Activated naive CD4-positive, alpha-beta T cell treated with anti-CD3 and anti-CD28 coated beads for 36 hours (primary cell): ENCODE measurements at regions of chr9 and their contacts with region 1.

Region 1: GRCh38 chr9:5909976-5910375 is 19.3 kb downstream of the MLANA start:
- DNase-seq: no peak
- H3K4me3 Mint-ChIP-seq: peak overlapping the region; percentile 32
- H3K27ac Mint-ChIP-seq: peak overlapping the region; percentile 89
- H3K4me1 Mint-ChIP-seq: peaks cover 29% of the 10 kb centered on the region
- H3K27me3 Mint-ChIP-seq: no peaks in the 10 kb centered on the region

Region 2: DNA sequence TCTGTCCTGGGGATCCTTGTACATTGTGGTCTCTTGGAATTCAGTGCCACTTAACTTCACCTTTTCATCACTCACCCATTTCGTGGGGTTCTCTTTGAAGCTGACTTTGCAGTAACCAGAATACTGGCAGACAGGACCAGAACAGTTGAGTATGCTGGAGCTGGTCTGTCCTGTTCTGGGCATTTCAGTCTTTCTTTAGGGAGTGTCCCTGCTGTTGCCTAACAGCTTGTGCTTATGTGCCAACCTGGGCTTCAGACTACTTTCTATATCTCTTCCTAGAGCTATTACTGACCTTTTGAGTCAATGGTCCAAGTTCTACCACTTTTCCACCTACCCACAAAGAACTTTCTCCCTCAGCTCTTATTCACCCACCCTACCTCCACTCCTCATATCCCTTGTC is 714.5 kb before region 1 on chr9:
- CTCF ChIA-PET with region 1: no interaction called
- intact Hi-C with region 1: no loop called
- DNase-seq: no peak
- H3K4me3 Mint-ChIP-seq: no peak overlapping the region
- H3K27ac Mint-ChIP-seq: no peak overlapping the region
- H3K4me1 Mint-ChIP-seq: no peaks in the 10 kb centered on the region
- H3K27me3 Mint-ChIP-seq: no peaks in the 10 kb centered on the region

Region 3: DNA sequence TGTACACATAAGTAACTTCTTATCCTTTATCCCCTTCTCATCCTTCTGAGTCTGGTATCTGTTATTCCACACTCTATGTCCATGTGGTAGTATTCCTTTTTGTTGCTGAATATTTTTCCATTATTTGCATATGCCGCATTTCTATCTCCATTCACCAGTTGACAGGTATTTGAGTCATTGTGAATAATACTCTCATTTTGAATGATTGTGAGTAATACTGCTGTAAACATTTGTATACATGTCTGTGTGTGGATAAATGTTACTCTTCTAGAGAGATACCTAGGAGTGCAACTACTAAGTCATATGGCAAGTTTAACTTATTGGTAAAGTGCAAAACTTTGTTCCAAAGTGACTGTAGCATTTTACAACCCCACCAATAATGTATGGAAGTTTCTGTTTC is 265.5 kb before region 1 on chr9:
- CTCF ChIA-PET with region 1: no interaction called
- intact Hi-C with region 1: loop called (anchors 1 kb)
- DNase-seq: no peak
- H3K4me3 Mint-ChIP-seq: no peak overlapping the region
- H3K27ac Mint-ChIP-seq: no peak overlapping the region
- H3K4me1 Mint-ChIP-seq: peaks cover 43% of the 10 kb centered on the region
- H3K27me3 Mint-ChIP-seq: no peaks in the 10 kb centered on the region

Region 4: DNA sequence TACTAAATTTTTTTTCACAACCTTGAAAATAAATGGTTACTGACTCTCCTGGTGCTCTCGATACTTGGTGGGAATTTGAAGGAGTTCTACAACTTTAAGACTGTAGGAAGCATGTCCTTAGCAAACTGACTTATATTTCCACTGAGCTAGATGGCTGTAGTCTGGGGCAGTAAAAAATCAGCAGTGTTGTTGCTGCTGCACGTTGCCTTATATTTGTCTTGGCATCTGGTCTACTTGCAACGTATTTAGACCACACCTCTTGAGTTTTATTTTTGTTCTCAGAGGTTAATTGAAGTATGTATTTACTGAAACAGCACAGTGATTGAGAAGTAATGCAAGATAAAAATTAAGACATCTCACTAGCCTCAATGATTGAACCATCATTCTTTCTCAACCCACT is 153.3 kb before region 1 on chr9:
- CTCF ChIA-PET with region 1: no interaction called
- intact Hi-C with region 1: no loop called
- DNase-seq: no peak
- H3K4me3 Mint-ChIP-seq: no peak overlapping the region
- H3K27ac Mint-ChIP-seq: no peak overlapping the region
- H3K4me1 Mint-ChIP-seq: peaks cover 26% of the 10 kb centered on the region
- H3K27me3 Mint-ChIP-seq: no peaks in the 10 kb centered on the region

Region 5: DNA sequence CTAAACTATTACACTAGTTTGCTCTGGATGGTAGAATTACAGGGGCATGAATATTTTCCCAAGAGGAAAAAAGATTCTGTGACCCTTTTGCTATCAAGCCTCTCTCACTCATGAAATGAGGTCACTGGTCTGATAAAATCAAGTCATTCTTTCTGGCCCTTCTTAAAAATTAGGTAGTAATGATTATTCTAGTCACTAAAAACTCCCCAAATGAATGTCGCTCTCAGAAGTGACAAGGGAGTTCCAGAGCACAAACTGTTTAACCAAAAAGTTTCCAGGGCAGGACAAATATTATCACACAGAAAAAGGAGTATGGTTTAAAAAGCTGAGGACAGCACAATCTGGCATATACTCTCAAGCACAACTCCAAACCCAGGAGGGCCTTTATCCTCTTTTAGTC is 89.6 kb before region 1 on chr9:
- CTCF ChIA-PET with region 1: no interaction called
- intact Hi-C with region 1: no loop called
- DNase-seq: no peak
- H3K4me3 Mint-ChIP-seq: no peak overlapping the region
- H3K27ac Mint-ChIP-seq: no peak overlapping the region
- H3K4me1 Mint-ChIP-seq: peaks cover 5% of the 10 kb centered on the region
- H3K27me3 Mint-ChIP-seq: no peaks in the 10 kb centered on the region

Region 6: DNA sequence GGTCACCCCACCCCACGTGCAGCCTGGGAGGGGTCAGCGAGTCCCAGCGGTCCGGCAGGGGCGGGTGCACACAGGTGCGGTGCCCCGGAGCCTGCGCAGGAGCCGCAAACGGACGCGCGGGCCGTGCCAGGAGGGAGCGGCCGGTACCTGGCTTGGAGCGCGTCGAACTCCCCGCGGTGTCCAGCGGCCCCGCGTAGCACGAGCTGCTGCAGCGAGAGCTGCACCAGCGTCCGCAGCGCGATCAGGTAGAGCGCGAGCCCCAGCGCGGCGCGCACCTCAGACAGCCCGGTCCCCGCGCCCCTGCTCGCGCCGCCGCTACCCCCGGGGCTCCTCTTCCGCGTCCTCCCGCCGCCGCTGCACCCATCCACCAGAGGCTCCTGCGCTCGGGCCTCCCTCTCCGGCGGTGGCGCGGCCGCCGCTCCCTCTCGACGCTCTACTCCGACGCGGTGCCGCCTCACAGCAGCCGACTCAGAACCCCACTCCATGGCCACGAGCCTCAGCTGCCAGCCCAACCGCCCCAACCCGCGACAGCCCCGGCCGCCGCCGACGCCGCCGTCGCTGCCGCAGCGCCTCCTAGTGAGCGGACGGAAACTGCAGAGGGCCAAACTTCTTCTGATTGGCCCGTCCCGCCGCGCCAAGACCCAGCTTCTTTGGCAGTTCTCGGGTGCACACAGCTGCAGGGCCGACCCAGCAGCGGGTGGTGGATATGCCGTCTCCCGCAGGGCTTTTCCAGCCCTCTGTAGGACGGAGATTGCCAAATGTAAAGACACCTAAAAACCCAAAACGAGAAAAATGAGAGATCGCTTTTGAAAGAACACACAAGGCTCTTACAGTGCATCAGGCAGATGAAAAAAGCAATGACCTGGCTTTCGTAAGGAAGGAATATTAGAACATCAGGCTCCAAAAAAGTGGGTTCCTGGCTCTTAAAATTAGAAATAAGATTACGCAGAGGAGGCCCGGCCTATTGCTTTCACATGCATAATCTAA is 77.1 kb before region 1 on chr9 and contains the start of gene ERMP1:
- CTCF ChIA-PET with region 1: no interaction called
- intact Hi-C with region 1: loop called (anchors 1 kb)
- DNase-seq: peak; percentile 93
- H3K4me3 Mint-ChIP-seq: peak within 1 kb of the TSS; percentile 93
- H3K27ac Mint-ChIP-seq: peak within 1 kb of the TSS; percentile 89
- H3K4me1 Mint-ChIP-seq: peaks cover 43% of the 10 kb centered on the region
- H3K27me3 Mint-ChIP-seq: no peaks in the 10 kb centered on the region
- total RNA-seq, gene ERMP1: 23.5 to 27.1 TPM

Region 7: DNA sequence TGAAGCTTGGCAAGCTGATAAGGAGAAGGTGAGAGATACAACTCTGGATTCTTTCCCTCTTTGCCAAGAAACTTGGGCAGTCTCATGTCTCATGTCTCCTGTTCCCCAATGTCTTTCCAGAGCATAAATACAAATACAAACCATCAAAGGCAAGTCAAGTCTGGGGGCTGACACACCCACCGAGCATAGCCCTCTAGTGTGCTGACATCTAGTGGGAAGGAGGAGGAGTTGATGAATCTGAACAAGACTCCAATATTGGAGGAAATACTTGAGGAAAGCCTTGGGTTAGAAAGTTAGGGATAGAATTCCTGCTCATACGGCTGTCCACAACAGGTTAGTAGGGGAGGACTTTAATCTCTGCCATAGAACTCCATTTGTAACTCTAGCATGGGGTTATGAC is 10.7 kb before region 1 on chr9:
- CTCF ChIA-PET with region 1: interaction called, 5 read pairs
- intact Hi-C with region 1: loop called (anchors 1 kb)
- DNase-seq: no peak
- H3K4me3 Mint-ChIP-seq: no peak overlapping the region
- H3K27ac Mint-ChIP-seq: peak overlapping the region; percentile 59
- H3K4me1 Mint-ChIP-seq: peaks cover 37% of the 10 kb centered on the region
- H3K27me3 Mint-ChIP-seq: no peaks in the 10 kb centered on the region

Region 8: DNA sequence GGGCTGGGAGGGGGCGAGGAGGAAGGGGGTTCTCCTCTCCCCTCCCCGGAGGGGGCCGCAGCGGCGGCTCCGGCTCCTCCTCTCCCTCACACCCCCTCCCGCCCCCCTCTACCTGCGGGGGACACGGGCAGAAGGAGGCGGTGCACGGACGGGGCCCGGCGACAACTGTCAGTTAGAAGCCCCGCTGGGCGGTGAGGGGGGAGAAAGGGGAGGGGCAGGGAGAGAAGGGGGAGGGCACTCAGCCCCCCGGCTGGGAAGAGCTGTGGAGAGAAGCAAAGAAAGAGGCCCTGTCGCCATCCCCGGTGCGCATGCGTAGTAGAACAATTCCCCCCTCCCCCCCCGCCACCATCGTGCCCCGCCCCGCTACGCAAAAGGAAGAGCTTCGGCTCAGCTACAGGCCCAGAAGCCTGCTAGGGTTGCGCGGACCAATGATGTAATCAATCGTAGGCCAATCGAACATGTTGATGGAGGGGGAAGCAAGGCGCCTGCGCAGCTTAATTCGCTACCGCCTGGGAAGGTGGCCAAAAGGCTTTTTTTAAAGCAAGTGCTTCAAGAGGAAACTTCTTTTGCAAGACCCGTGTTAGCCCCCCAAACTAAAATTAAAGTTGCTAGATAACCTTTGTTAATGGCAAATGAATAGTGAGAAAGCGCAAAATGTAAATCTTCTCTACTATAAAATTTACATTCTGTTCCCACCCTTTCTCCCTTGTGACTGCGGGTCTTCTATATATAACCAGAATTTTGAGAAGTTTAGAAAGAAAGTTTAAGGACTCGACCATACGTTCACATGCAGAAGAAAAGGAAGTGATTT is 98.4 kb after region 1 on chr9:
- CTCF ChIA-PET with region 1: no interaction called
- intact Hi-C with region 1: loop called (anchors 1 kb)
- DNase-seq: peak; percentile 98
- H3K4me3 Mint-ChIP-seq: peak overlapping the region; percentile 76
- H3K27ac Mint-ChIP-seq: peak overlapping the region; percentile 82
- H3K4me1 Mint-ChIP-seq: peaks cover 61% of the 10 kb centered on the region
- H3K27me3 Mint-ChIP-seq: no peaks in the 10 kb centered on the region